ENCODE measurements at regions of chr18 and their contacts with region 1.

Region 1: DNA sequence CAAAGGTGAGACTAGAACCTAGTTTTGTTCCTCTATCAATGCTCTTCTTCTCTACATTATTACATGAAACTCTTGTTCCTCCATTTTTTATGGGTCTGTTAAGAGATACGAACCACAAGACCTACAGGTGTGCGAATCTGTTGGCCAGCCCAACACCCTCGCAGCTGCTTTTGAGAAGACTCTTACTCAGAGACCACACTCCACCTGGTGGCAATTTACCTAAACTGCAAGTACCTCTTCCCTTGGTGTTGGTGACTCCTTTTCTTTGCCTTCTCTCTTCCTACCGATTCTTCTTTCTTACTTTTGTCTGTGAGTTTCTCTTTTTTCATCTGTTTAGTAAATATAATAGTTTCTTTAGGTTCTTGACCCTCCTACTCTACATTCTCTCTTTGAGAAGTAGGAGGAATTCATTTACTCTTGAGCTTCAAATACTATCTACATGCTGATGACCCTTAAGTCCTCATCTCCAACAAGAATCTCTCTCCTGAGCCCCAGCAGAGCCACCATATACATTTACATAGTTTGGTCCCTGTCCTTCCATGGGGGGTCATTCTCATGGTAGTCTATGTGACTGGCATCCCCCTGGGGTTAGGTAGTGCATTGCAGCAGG is 81.8 kb upstream of the GAREM1 start:
- DNase-seq: peak; percentile 10 to 48
- H3K4me3 ChIP-seq: no peak overlapping the region
- H3K27ac ChIP-seq: no peak overlapping the region
- H3K4me1 ChIP-seq: no peaks in the 10 kb centered on the region
- H3K27me3 ChIP-seq: no peaks in the 10 kb centered on the region
- CTCF ChIP-seq: peak; percentile 74

Region 2: GRCh38 chr18:31750273-31750672 is 802.3 kb before region 1 on chr18:
- CTCF ChIA-PET with region 1: no interaction called
- POLR2A ChIA-PET with region 1: interaction called, 10 read pairs
- intact Hi-C with region 1: no loop called
- DNase-seq: no peak
- H3K4me3 ChIP-seq: no peak overlapping the region
- H3K27ac ChIP-seq: no peak overlapping the region
- H3K4me1 ChIP-seq: no peaks in the 10 kb centered on the region
- H3K27me3 ChIP-seq: peaks cover 4% of the 10 kb centered on the region; the same call in 1 of the 2 replicates
- CTCF ChIP-seq: no peak

Region 3: GRCh38 chr18:32158108-32158624 is 394.4 kb before region 1 on chr18:
- CTCF ChIA-PET with region 1: no interaction called
- POLR2A ChIA-PET with region 1: interaction called, 9 read pairs
- intact Hi-C with region 1: loop called (anchors 1 kb)
- DNase-seq: peak; percentile 53 to 55
- H3K4me3 ChIP-seq: no peak overlapping the region
- H3K27ac ChIP-seq: no peak overlapping the region
- H3K4me1 ChIP-seq: no peaks in the 10 kb centered on the region
- H3K27me3 ChIP-seq: no peaks in the 10 kb centered on the region
- CTCF ChIP-seq: peak; percentile 74

Region 4: GRCh38 chr18:32271672-32272208 is 280.8 kb before region 1 on chr18:
- CTCF ChIA-PET with region 1: interaction called, 4 read pairs
- POLR2A ChIA-PET with region 1: no interaction called
- intact Hi-C with region 1: loop called (anchors 1 kb)
- DNase-seq: peak in 1 of 2 experiments; percentile 12
- H3K4me3 ChIP-seq: no peak overlapping the region
- H3K27ac ChIP-seq: no peak overlapping the region
- H3K4me1 ChIP-seq: no peaks in the 10 kb centered on the region
- H3K27me3 ChIP-seq: no peaks in the 10 kb centered on the region
- CTCF ChIP-seq: peak; percentile 79

Measured in PC-9 (cell line).